Body of pancreas (tissue), 4 donors: ENCODE measurements at regions of chr11 and their contacts with region 1.

Region 1: DNA sequence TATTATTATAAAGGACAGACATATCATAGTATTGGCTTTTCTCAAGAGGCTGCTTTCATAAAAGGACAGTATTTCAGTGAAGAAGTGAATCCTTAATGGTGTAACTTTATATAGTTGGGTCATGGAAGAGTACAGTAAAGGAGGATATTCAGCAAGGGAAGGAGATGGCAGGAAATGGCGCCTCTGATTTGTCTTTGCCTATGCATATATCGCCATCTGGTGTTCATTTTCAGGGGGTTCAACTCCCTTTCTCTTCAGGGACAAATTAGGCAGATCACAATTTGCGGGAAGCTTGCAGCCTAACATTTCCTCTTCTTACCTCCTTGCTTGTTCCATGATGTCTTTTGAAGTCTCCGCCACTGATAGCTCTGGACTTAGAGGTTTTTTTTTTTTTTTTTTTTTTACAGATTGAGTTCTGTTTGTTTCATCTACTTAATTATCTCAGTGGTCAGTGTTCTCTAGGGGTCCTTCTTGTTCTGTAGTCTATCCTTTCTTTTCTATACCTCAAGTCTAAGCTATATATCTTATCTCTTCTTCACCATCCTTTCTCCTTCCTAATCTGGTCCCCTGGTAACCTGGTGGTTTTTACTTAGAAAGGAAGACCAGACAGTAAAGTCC is 21.8 kb upstream of the RRM1 start:
- DNase-seq: peak; percentile 60 to 84 (median 72)
- ATAC-seq: peak; percentile 93
- H3K4me3 ChIP-seq: no peak overlapping the region
- H3K27ac ChIP-seq: no peak overlapping the region
- H3K4me1 ChIP-seq: no peaks in the 10 kb centered on the region
- H3K27me3 ChIP-seq: no peaks in the 10 kb centered on the region
- CTCF ChIP-seq: peak; percentile 51 to 97 (median 93)
- POLR2A ChIP-seq: no peak

Region 2: DNA sequence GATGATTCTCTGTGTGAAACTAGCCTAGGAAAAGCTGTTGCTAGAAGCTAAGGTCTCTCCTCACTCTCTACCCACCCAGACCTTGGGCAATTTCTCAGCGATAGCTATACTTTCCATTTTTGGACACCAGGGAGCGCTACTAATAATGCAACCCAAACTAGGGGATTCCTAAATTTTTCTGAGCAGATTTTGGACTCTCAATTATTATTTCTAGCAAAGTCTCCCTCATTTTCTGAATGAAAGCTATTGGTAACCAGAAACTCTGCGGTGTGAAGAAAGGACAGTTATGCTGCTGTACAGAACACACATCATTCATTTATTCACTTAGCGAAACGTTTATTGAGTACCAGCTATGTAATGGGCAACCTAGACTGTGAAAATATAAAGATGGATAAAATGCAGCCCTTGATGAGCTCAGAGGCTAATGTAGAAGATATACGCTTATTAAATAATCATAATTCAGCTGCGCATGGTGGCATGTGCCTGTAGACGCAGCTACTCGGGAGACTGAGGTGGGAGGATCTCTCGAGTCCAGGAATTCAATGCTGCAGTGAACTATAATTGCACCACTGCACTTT is 223.4 kb before region 1 on chr11:
- intact Hi-C with region 1: loop called (anchors 5 kb)
- DNase-seq: peak; percentile 32 to 48 (median 39)
- ATAC-seq: peak; percentile 79
- H3K4me3 ChIP-seq: no peak overlapping the region
- H3K27ac ChIP-seq: no peak overlapping the region
- H3K4me1 ChIP-seq: peaks cover 4% of the 10 kb centered on the region
- H3K27me3 ChIP-seq: no peaks in the 10 kb centered on the region
- CTCF ChIP-seq: peak; percentile 31 to 76 (median 71)
- POLR2A ChIP-seq: no peak

Region 3: GRCh38 chr11:4134844-4135243 is 62.1 kb after region 1 on chr11:
- intact Hi-C with region 1: no loop called
- DNase-seq: no peak
- ATAC-seq: no peak
- H3K4me3 ChIP-seq: no peak overlapping the region
- H3K27ac ChIP-seq: no peak overlapping the region
- H3K4me1 ChIP-seq: no peaks in the 10 kb centered on the region
- H3K27me3 ChIP-seq: no peaks in the 10 kb centered on the region
- CTCF ChIP-seq: no peak
- POLR2A ChIP-seq: no peak